PC-9 (cell line): ENCODE measurements at regions of chr11 and their contacts with region 1.

Region 1: DNA sequence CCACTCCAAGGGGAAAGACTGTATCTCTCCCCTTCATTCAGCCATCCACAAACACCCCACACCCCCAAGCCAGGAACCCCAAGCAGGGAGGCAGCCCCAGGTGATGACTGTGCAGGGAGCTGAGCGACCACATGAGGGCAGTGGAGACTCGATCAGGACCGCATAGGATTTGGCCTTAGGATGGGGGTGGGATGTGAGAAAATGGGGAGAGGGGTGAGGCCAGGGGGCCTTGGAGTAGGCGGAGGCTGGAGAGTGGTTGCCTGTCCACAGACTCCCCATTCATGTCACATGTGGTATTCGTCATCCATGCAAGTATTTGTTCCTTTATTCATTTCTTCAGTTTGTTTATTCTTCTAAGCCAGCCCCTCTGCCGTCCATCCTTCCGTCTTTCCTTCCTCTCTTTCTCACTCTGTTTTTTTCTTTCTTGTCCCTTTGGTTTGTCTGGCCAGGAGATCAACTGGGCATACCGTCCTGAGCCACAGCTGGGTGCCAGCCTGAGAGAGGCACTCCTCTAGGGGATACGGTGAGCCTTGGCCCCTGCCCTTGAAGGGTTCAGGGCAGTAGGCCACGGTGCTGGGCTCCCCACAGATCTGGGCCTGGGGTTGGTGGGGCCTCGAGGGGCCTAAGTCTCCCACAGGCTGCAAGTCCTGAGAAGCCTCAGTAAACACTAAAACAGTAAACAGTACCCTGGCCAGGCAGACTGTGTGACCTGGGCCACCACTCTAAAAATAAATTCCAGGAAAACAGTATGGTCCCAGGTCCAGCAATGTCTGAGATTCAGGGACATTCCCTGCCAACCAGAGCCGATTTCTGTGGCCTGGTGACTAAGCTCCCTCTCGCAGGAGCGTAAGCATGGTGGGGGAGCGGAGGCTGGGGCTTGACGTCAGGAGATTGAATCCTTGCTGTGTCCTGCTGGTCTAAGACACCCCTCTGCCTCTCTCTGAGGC is 2.5 kb upstream of the RHOD start:
- DNase-seq: peak; percentile 52 to 77
- H3K4me3 ChIP-seq: no peak overlapping the region
- H3K27ac ChIP-seq: peak overlapping the region; percentile 64
- H3K4me1 ChIP-seq: peaks cover 48% of the 10 kb centered on the region
- H3K27me3 ChIP-seq: no peaks in the 10 kb centered on the region
- CTCF ChIP-seq: peak; percentile 86

Region 2: DNA sequence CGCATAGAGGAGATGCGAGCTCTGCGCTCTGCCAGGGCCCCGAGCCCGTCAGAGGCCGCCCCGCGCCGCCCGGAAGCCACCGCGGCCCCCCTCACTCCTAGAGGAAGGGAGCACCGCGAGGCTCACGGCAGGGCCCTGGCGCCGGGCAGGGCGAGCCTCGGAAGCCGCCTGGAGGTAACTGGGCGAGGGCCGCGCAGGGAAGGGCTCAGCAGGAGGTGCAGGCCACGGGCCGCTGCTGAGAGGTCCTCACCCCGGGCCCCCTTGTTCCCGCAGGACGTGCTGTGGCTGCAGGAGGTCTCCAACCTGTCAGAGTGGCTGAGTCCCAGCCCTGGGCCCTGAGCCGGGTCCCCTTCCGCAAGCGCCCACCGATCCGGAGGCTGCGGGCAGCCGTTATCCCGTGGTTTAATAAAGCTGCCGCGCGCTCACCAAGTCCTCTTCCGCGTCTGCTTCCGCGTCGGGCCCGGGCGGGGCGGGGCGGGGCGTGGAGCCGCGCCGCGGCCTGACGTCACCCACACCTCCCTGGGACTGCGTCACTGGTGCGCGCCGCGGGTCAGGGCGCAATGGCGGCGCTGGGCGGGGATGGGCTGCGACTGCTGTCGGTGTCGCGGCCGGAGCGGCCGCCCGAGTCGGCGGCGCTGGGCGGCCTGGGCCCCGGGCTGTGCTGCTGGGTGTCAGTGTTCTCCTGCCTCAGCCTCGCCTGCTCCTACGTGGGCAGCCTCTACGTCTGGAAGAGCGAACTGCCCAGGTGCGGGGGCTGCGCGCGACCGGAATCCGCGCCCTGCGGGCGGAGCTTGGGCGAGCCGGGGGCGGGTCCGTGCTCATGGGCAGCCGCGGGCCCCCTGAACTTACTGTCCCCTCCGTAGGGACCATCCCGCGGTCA is 211.0 kb before region 1 on chr11 and contains the start of gene RCE1:
- CTCF ChIA-PET with region 1: no interaction called
- POLR2A ChIA-PET with region 1: interaction called, 4 read pairs
- intact Hi-C with region 1: loop called (anchors 10 kb)
- DNase-seq: peak; percentile 79 to 93
- H3K4me3 ChIP-seq: peak within 1 kb of the TSS; percentile 94
- H3K27ac ChIP-seq: peak within 1 kb of the TSS; percentile 67
- H3K4me1 ChIP-seq: peaks cover 52% of the 10 kb centered on the region
- H3K27me3 ChIP-seq: no peaks in the 10 kb centered on the region
- CTCF ChIP-seq: no peak
- total RNA-seq, gene RCE1: 42.1 and 42.9 TPM in 2 replicates

Region 3: DNA sequence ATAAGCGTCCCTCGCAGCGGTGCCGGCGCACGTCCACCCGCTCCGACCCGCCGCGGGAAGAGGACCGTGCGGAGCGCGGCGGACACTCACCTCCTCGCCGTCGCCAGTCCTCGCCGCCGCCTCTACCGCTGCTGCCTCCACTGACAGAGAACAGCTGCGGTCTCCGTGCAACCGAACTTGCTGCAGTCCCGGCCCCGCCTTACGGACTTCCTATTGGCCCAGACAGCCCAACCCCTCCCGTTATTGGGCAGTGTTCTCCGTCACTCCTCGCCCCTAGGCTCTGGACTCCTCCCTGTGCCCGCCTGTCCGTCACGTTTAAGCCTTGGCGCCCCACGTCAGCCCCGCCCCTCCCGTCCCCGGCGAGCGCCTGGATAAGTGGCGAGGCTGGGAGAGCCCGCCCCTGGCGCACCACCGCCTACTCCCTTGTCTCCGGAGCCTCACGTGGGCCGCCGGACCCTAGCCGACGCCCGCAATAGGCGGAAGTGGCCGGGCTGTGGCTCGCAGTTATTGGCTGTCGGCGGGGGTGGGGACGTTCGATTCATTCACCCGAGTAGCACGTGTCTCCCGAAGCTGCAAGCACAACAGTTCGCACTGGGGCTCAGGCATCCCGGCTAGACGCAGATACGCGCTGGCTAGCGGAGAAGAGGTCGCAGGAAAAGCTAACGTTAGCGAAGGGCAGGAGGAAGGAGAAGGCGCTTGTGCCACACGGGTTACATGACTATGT is 95.8 kb before region 1 on chr11 and contains the start of gene PC:
- CTCF ChIA-PET with region 1: interaction called, 3 read pairs
- POLR2A ChIA-PET with region 1: interaction called, 8 read pairs
- intact Hi-C with region 1: loop called (anchors 1 kb)
- DNase-seq: peak; percentile 99 to 100
- H3K4me3 ChIP-seq: peak within 1 kb of the TSS; percentile 63
- H3K27ac ChIP-seq: no peak within 1 kb of the TSS
- H3K4me1 ChIP-seq: peaks cover 22% of the 10 kb centered on the region
- H3K27me3 ChIP-seq: no peaks in the 10 kb centered on the region
- CTCF ChIP-seq: no peak
- total RNA-seq, gene PC: 34.9 and 38.9 TPM in 2 replicates

Region 4: GRCh38 chr11:67082035-67082791 is 28.0 kb after region 1 on chr11:
- CTCF ChIA-PET with region 1: interaction called, 19 read pairs
- POLR2A ChIA-PET with region 1: no interaction called
- intact Hi-C with region 1: no loop called
- DNase-seq: peak in 1 of 2 experiments; percentile 75
- H3K4me3 ChIP-seq: no peak overlapping the region
- H3K27ac ChIP-seq: no peak overlapping the region
- H3K4me1 ChIP-seq: peaks cover 44% of the 10 kb centered on the region
- H3K27me3 ChIP-seq: no peaks in the 10 kb centered on the region
- CTCF ChIP-seq: no peak

Region 5: DNA sequence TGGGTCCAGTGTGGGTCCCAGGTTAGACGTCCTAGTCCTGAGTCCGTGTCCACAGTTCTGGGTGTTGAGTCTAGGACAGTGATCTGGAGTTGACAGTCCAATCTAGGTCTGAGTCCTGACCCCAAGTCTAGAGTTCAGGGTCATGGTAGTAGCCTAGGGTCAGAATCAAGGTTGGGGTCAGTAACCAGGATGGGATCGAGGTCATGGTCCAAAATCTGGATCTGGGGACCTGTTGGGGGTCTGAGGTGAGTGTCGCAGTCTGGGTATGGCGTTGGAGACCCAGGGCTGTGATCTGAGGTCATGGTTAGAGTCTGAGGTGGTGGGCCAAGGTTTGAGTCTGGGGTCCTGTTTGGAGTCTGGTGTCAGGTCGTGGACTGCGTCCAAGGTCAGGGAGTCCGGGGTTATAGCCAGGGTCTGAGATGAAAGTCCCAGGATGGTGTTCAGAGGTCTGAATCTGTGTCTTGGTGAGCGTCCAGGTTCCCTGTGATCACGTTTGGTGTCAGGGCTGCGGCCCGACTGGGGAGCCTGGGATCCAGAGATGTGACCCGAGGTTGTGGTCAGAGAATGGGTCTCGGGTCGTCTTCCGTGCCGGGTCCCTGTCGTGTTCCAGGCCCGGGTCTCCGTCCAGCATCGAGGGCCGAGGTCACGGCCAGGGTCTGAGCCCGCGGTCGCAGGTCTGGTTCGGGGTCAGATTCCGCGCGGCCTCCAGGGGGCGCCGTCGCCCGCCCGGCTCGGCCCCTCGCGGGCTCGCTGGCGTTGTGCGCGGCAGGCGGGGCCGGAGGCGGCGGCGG is 211.7 kb after region 1 on chr11:
- CTCF ChIA-PET with region 1: no interaction called
- POLR2A ChIA-PET with region 1: no interaction called
- intact Hi-C with region 1: loop called (anchors 5 kb)
- DNase-seq: peak in 1 of 2 experiments; percentile 88
- H3K4me3 ChIP-seq: peak overlapping the region; percentile 32; the same call in 1 of the 2 replicates
- H3K27ac ChIP-seq: no peak overlapping the region
- H3K4me1 ChIP-seq: peaks cover 38% of the 10 kb centered on the region
- H3K27me3 ChIP-seq: no peaks in the 10 kb centered on the region
- CTCF ChIP-seq: peak; percentile 77

Region 6: DNA sequence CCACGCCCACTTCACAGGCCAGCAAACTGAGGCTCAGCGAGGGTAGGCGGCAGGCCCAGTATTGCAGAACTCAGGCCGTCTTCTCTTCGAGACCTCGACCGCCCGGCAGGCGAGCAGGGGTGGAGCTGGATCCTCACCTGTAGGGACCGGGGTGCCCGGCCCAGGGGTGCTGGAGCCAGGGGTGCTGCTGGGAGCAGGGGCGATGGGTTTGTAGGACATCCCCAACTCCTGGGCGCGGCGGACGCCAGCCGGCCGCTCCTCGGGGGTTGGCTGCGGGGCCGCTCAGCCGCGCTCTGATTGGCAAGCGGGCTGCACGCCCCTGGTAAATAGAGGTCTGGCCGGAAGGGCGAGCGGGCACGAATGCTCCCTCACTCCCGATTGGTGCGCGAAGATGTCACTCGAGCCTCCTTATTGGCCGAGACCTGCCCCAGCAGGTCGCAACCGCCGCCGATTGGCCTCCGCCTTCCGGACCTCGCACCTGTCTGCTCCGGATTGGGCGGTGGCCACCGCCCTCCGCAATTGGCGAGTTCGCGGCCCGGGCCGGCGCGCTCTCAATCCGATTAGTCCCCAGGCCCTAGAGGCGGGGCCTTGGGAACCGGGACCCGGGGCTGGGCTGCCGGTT is 453.8 kb after region 1 on chr11 and contains the start of gene CDK2AP2:
- CTCF ChIA-PET with region 1: no interaction called
- POLR2A ChIA-PET with region 1: no interaction called
- intact Hi-C with region 1: loop called (anchors 2 kb)
- DNase-seq: peak; percentile 99 to 100
- H3K4me3 ChIP-seq: peak within 1 kb of the TSS; percentile 66
- H3K27ac ChIP-seq: peak within 1 kb of the TSS; percentile 79
- H3K4me1 ChIP-seq: peaks cover 33% of the 10 kb centered on the region
- H3K27me3 ChIP-seq: peaks cover 4% of the 10 kb centered on the region; the same call in 1 of the 2 replicates
- CTCF ChIP-seq: no peak
- total RNA-seq, gene CDK2AP2: 80.0 and 89.3 TPM in 2 replicates

Region 7: GRCh38 chr11:67665541-67666362 is 611.6 kb after region 1 on chr11:
- CTCF ChIA-PET with region 1: no interaction called
- POLR2A ChIA-PET with region 1: no interaction called
- intact Hi-C with region 1: no loop called
- DNase-seq: peak; percentile 55 to 76
- H3K4me3 ChIP-seq: no peak overlapping the region
- H3K27ac ChIP-seq: no peak overlapping the region
- H3K4me1 ChIP-seq: peaks cover 7% of the 10 kb centered on the region; the same call in 1 of the 2 replicates
- H3K27me3 ChIP-seq: no peaks in the 10 kb centered on the region
- CTCF ChIP-seq: peak; percentile 70